WTC11 (cell line): ENCODE measurements at regions of chr16 and their contacts with region 1.

Region 1: GRCh38 chr16:85114909-85115567 is 2.8 kb upstream of the CIBAR2 start:
- DNase-seq: peak; percentile 99
- ATAC-seq: peak; percentile 93
- H3K4me3 Mint-ChIP-seq: peak overlapping the region; percentile 24; the same call in 1 of the 2 replicates
- H3K27ac Mint-ChIP-seq: peak overlapping the region; percentile 69
- H3K4me1 Mint-ChIP-seq: peaks cover 10% of the 10 kb centered on the region
- H3K27me3 Mint-ChIP-seq: no peaks in the 10 kb centered on the region
- CTCF ChIP-seq: peak; percentile 87

Region 2: GRCh38 chr16:84839054-84839453 is 276.0 kb before region 1 on chr16:
- CTCF ChIA-PET with region 1: no interaction called
- POLR2A ChIA-PET with region 1: no interaction called
- DNase-seq: no peak
- ATAC-seq: no peak
- H3K4me3 Mint-ChIP-seq: no peak overlapping the region
- H3K27ac Mint-ChIP-seq: no peak overlapping the region
- H3K4me1 Mint-ChIP-seq: peaks cover 45% of the 10 kb centered on the region
- H3K27me3 Mint-ChIP-seq: peaks cover 3% of the 10 kb centered on the region
- CTCF ChIP-seq: no peak

Region 3: DNA sequence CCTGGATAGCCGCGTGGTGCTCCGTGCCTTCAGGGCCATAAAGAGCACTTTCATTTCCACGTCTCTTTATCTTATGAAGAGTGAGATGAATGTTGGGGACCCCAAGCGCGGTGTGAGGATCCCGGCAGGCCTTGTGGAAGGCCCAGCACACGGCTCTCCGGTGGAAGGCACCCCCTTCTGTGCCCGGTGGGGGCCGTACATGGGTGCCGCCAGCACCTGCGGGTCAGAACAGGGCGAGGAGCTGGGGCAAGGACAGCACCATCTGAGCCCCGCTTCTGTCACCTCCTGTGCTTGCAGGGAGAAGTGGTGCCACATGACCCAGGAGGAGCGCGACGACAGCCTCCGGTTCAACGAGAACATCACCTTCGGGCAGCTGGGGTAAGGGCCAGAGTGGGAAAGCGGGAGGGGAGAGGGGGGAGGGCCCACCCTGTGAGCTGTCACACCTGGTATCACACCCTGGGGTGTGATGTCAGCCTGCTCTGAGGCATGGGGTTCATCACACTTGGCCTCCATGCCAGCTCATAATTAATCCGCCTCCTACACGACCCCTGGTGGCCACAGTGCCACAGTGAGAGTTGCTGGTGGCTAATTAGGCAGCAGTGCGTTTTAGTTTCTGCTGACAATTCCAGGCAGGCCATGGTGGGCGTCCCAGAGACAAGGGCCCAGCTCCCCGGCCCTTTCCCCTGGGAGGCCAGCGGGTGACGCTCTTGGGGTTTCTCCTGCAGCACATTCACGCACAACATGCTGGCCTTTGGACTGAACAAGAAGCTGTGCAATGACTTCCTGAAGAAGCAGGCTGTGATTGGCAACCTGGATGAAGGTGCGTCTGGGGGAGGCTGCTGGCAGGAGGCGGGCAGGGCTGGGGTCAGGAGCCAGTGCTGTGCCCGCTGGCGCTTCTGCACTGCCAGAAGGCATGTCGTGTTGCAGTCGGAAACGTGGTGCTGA is 28.4 kb before region 1 on chr16:
- CTCF ChIA-PET with region 1: interaction called, 22 read pairs
- POLR2A ChIA-PET with region 1: no interaction called
- DNase-seq: peak; percentile 86
- ATAC-seq: peak; percentile 34
- H3K4me3 Mint-ChIP-seq: no peak overlapping the region
- H3K27ac Mint-ChIP-seq: no peak overlapping the region
- H3K4me1 Mint-ChIP-seq: peaks cover 42% of the 10 kb centered on the region
- H3K27me3 Mint-ChIP-seq: peaks cover 52% of the 10 kb centered on the region
- CTCF ChIP-seq: peak; percentile 85

Region 4: GRCh38 chr16:85144026-85144915 is 29.2 kb after region 1 on chr16:
- CTCF ChIA-PET with region 1: interaction called, 12 read pairs
- POLR2A ChIA-PET with region 1: no interaction called
- DNase-seq: no peak
- ATAC-seq: no peak
- H3K4me3 Mint-ChIP-seq: no peak overlapping the region
- H3K27ac Mint-ChIP-seq: 0 out of 2 replicates have a peak overlapping the region, but pooled peaks have one; percentile 49
- H3K4me1 Mint-ChIP-seq: peaks cover 15% of the 10 kb centered on the region
- H3K27me3 Mint-ChIP-seq: no peaks in the 10 kb centered on the region; the same call in 1 of the 2 replicates
- CTCF ChIP-seq: no peak

Region 5: DNA sequence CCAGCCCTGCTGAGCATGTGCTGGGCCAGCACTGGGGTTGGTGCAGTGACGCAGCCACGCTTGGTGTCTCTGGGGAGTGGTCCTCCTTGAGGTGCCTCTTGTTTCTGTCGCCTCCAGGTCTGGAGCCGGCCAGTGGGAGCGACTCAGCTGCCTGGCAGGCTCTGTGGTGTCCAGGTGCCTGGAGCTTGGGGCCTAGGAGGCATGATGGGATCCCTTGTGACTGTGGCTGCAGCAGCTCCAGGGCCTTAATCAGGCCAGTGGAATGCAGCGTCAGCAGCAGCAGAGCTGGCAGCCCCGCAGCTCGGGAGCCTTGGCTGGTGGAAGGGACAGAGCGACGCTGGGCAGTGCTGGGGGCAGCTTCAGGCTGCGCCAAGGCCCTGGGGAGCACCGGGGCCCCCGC is 72.0 kb after region 1 on chr16:
- CTCF ChIA-PET with region 1: interaction called, 21 read pairs
- POLR2A ChIA-PET with region 1: no interaction called
- DNase-seq: no peak
- ATAC-seq: peak; percentile 55
- H3K4me3 Mint-ChIP-seq: no peak overlapping the region
- H3K27ac Mint-ChIP-seq: peak overlapping the region; percentile 78; the same call in 1 of the 2 replicates
- H3K4me1 Mint-ChIP-seq: 0 out of 2 replicates have a peak, but pooled peaks cover 9% of the 10 kb centered on the region
- H3K27me3 Mint-ChIP-seq: peaks cover 2% of the 10 kb centered on the region; the same call in 1 of the 2 replicates
- CTCF ChIP-seq: no peak

Region 6: GRCh38 chr16:85234310-85235204 is 119.5 kb after region 1 on chr16:
- CTCF ChIA-PET with region 1: interaction called, 29 read pairs
- POLR2A ChIA-PET with region 1: no interaction called
- DNase-seq: peak; percentile 92
- ATAC-seq: peak; percentile 70
- H3K4me3 Mint-ChIP-seq: peak overlapping the region; percentile 58
- H3K27ac Mint-ChIP-seq: peak overlapping the region; percentile 87
- H3K4me1 Mint-ChIP-seq: peaks cover 37% of the 10 kb centered on the region
- H3K27me3 Mint-ChIP-seq: no peaks in the 10 kb centered on the region; the same call in 1 of the 2 replicates
- CTCF ChIP-seq: no peak

Region 7: GRCh38 chr16:85275533-85276249 is 160.7 kb after region 1 on chr16:
- CTCF ChIA-PET with region 1: interaction called, 16 read pairs
- POLR2A ChIA-PET with region 1: no interaction called
- DNase-seq: peak; percentile 93
- ATAC-seq: peak; percentile 85
- H3K4me3 Mint-ChIP-seq: no peak overlapping the region
- H3K27ac Mint-ChIP-seq: no peak overlapping the region
- H3K4me1 Mint-ChIP-seq: peaks cover 26% of the 10 kb centered on the region
- H3K27me3 Mint-ChIP-seq: no peaks in the 10 kb centered on the region
- CTCF ChIP-seq: peak; percentile 66

Region 8: DNA sequence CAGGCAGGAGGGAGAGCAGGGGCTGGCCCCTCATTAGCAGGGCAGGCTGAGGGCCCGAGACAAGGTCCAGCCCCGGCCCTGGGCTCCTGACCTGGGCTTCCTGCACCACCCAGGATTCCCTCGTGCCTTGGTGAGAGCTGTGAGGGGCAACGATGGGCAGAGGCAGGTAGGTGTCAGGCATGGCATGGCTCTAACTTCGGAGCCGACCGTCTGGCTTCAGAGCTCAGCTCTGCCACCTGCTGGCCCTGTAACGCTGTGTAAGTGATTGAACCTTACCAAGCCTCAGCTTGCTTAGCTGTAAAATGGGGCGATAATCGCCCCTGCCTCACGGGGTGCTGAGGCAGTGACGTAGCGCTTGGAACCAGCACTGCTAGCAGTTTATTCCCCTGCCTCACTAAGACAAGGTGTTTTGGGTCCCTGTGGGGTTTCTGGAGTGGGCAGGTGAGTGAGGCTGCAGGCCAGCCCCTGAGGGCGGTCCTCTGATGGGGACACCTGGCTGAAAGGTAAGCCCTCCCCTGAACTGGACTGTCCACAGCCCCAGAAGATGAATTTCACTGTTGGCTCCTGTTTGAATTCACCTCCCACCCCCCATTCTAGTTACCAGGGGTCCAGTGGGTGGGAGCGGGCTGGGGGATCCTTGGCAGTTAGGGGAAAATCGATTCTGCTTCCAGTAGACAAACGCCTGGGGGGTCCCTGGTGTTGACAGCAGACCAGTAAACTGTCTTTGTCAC is 313.3 kb after region 1 on chr16:
- CTCF ChIA-PET with region 1: interaction called, 11 read pairs
- POLR2A ChIA-PET with region 1: no interaction called
- DNase-seq: peak; percentile 63
- ATAC-seq: peak; percentile 59
- H3K4me3 Mint-ChIP-seq: no peak overlapping the region
- H3K27ac Mint-ChIP-seq: no peak overlapping the region
- H3K4me1 Mint-ChIP-seq: peaks cover 7% of the 10 kb centered on the region; the same call in 1 of the 2 replicates
- H3K27me3 Mint-ChIP-seq: no peaks in the 10 kb centered on the region
- CTCF ChIP-seq: peak; percentile 27; the same call in 1 of the 2 replicates